CD8-positive, alpha-beta T cell (primary cell): ENCODE measurements at regions of chr3 and their contacts with region 1.

Region 1: DNA sequence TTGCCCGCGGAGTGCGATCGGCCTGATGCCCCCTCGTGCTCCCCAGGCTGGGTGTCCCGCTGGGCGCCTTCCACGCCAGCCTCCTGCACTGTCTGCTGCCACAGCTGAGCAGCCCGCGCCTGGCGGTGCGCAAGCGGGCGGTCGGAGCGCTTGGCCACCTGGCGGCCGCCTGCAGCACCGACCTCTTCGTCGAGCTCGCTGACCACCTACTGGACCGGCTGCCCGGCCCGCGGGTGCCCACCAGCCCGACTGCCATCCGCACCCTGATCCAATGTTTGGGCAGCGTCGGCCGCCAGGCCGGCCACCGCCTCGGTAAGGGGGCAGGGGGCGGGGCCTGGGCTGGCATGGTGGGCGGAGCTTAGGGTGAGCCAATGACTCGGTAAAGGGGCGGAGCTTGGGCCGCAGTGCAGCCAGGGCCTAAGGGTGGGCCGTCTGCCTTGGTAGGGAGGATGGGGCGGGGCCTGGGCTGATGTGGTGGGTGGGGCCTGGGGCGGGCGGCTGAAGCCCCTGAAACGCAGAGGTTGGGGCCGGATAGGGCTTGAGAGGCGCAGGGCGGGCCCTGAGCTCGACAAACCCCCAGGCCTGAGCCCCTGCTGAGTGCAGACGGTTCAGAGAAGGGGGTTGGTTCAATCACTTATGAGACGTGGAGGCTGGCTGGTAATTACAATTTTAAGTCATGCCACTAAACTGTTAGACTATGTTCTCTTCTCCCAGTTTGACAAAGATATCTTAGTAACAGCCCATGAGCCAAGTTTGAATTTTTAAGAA is 13.7 kb downstream of the CAND2 start:
- DNase-seq: peak; percentile 87 to 98 (median 96)
- ATAC-seq: peak; percentile 99
- H3K4me3 ChIP-seq: peak overlapping the region; percentile 51 to 73
- H3K4me3 Mint-ChIP-seq: peak overlapping the region; percentile 73
- H3K27ac ChIP-seq: no peak overlapping the region
- H3K27ac Mint-ChIP-seq: peak overlapping the region; percentile 64
- H3K4me1 ChIP-seq: peaks cover 8% of the 10 kb centered on the region
- H3K4me1 Mint-ChIP-seq: peaks cover 11% of the 10 kb centered on the region
- H3K27me3 ChIP-seq: no peaks in the 10 kb centered on the region
- H3K27me3 Mint-ChIP-seq: no peaks in the 10 kb centered on the region
- CTCF ChIP-seq: peak; percentile 89

Region 2: DNA sequence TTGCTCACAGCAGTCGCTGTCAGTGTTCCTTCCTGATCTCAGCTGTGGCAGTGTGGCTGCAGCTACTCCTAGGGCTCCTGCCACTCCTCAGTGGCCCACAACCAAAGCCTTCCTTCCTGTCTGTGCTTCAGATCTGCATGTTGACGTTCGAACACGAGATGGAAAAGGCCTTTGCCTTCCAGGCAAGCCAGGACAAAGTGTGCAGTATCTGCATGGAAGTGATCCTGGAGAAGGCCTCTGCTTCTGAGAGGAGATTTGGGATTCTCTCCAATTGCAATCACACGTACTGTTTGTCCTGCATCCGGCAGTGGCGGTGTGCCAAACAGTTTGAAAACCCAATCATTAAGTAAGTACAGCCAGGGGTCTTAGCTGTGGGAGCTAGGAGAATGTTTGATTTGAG is 235.5 kb before region 1 on chr3:
- CTCF ChIA-PET with region 1: no interaction called
- POLR2A ChIA-PET with region 1: no interaction called
- intact Hi-C with region 1: no loop called
- DNase-seq: no peak
- ATAC-seq: no peak
- H3K4me3 ChIP-seq: no peak overlapping the region
- H3K4me3 Mint-ChIP-seq: no peak overlapping the region
- H3K27ac ChIP-seq: no peak overlapping the region
- H3K27ac Mint-ChIP-seq: no peak overlapping the region
- H3K4me1 ChIP-seq: no peaks in the 10 kb centered on the region
- H3K4me1 Mint-ChIP-seq: no peaks in the 10 kb centered on the region
- H3K27me3 ChIP-seq: no peaks in the 10 kb centered on the region
- H3K27me3 Mint-ChIP-seq: no peaks in the 10 kb centered on the region
- CTCF ChIP-seq: no peak

Region 3: DNA sequence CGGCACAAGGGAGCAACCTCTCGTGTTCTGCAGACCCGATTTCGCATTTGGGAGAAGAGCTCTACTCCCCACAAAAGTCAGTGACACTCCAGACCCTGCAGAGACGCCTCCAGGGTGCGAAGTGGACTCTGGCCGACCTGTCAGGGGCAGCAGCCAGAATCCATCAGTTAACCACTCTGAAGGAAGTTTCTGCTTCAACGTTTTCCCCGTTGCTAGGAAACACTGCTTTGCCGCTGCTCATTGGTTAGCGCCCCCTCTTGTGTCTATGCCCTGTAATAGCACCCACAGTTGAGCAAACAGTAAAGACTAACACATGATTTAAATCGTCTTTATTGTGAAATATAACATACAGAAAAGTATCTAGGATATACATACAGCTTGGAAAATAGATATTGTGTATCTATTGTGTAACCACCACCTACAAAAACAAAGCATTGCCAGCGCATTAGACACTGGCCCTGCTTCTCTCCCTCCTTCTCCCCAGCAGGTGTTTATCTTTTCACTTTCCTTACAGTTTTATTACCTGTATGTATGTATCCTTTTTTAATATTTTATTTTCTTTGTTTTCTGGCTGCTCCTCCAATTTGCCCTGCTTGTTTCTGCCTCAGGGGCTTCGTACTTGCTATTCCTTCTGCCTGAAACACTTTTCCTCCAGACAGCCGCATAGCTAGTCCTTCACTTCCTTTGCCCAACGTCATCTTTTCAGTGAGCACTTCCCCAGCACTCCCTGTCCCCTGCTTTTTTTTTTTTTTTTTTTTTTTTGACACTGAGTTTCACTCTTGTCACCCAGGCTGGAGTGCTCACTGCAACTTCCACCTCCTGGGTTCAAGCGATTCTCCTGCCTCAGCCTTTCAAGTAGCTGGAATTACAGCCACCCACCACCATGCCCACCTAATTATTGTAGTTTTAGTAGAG is 90.0 kb before region 1 on chr3:
- CTCF ChIA-PET with region 1: interaction called, 5 read pairs
- POLR2A ChIA-PET with region 1: no interaction called
- intact Hi-C with region 1: loop called in 1 of 2 experiments (anchors 5 kb)
- DNase-seq: peak; percentile 46 to 89 (median 71)
- ATAC-seq: peak; percentile 99
- H3K4me3 ChIP-seq: no peak overlapping the region
- H3K4me3 Mint-ChIP-seq: peak overlapping the region; percentile 69
- H3K27ac ChIP-seq: no peak overlapping the region
- H3K27ac Mint-ChIP-seq: no peak overlapping the region
- H3K4me1 ChIP-seq: peaks cover 4% of the 10 kb centered on the region
- H3K4me1 Mint-ChIP-seq: peaks cover 10% of the 10 kb centered on the region
- H3K27me3 ChIP-seq: peaks cover 0 to 3% of the 10 kb centered on the region in 2 experiments
- H3K27me3 Mint-ChIP-seq: no peaks in the 10 kb centered on the region
- CTCF ChIP-seq: peak; percentile 84

Region 4: DNA sequence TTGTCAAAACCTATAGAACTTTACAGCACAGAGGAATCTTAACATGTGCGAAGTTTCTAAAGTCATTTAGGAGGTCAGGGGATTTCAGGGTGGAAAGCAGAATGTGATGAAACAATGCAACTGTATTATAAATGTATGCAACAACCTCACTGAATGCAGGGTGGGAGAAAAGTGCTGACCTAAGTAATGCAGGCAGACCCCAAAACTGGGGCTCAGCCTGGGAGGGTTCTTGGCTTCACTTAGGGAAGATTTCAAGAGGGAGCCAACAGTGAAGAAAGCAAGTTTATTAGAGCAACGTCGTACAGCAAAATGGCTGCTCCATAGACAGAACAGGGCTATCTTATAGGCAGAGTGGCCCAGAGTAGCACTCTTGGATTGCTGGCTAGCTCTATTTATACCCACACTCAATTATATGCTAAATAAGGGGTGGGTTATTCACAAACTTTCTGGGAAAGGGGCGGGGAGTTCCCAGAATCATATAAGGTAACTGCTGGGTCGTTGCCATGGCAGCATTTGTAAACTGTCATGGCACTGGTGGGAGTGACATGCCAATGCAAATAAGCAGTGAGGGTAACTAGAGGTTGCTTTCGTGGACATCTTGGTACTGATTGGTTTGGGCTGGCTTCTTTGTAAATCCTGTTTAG is 27.9 kb before region 1 on chr3:
- CTCF ChIA-PET with region 1: interaction called, 22 read pairs
- POLR2A ChIA-PET with region 1: no interaction called
- intact Hi-C with region 1: no loop called
- DNase-seq: peak in 1 of 9 experiments; percentile 24
- ATAC-seq: no peak
- H3K4me3 ChIP-seq: no peak overlapping the region
- H3K4me3 Mint-ChIP-seq: no peak overlapping the region
- H3K27ac ChIP-seq: no peak overlapping the region
- H3K27ac Mint-ChIP-seq: no peak overlapping the region
- H3K4me1 ChIP-seq: no peaks in the 10 kb centered on the region
- H3K4me1 Mint-ChIP-seq: no peaks in the 10 kb centered on the region
- H3K27me3 ChIP-seq: peaks cover 0 to 3% of the 10 kb centered on the region in 2 experiments
- H3K27me3 Mint-ChIP-seq: peaks cover 26% of the 10 kb centered on the region
- CTCF ChIP-seq: no peak

Region 5: GRCh38 chr3:12796171-12797123 is 13.8 kb before region 1 on chr3 and contains the start of gene CAND2:
- CTCF ChIA-PET with region 1: interaction called, 15 read pairs
- POLR2A ChIA-PET with region 1: interaction called, 16 read pairs
- intact Hi-C with region 1: loop called in 1 of 2 experiments (anchors 1 kb)
- DNase-seq: peak in 7 of 9 experiments; percentile 15 to 66 (median 43)
- ATAC-seq: peak; percentile 86
- H3K4me3 ChIP-seq: peak within 1 kb of the TSS; percentile 65 to 67
- H3K4me3 Mint-ChIP-seq: peak within 1 kb of the TSS; percentile 87
- H3K27ac ChIP-seq: no peak within 1 kb of the TSS
- H3K27ac Mint-ChIP-seq: peak within 1 kb of the TSS; percentile 32
- H3K4me1 ChIP-seq: peaks cover 6% of the 10 kb centered on the region
- H3K4me1 Mint-ChIP-seq: peaks cover 16% of the 10 kb centered on the region
- H3K27me3 ChIP-seq: no peaks in the 10 kb centered on the region
- H3K27me3 Mint-ChIP-seq: peaks cover 3% of the 10 kb centered on the region
- CTCF ChIP-seq: no peak
- total RNA-seq, gene CAND2: 0.92 to 1.1 TPM

Region 6: GRCh38 chr3:12830785-12831156 is 20.6 kb after region 1 on chr3:
- CTCF ChIA-PET with region 1: interaction called, 16 read pairs
- POLR2A ChIA-PET with region 1: interaction called, 8 read pairs
- intact Hi-C with region 1: no loop called
- DNase-seq: no peak
- ATAC-seq: no peak
- H3K4me3 ChIP-seq: no peak overlapping the region
- H3K4me3 Mint-ChIP-seq: no peak overlapping the region
- H3K27ac ChIP-seq: no peak overlapping the region
- H3K27ac Mint-ChIP-seq: peak overlapping the region; percentile 72
- H3K4me1 ChIP-seq: no peaks in the 10 kb centered on the region
- H3K4me1 Mint-ChIP-seq: no peaks in the 10 kb centered on the region
- H3K27me3 ChIP-seq: no peaks in the 10 kb centered on the region
- H3K27me3 Mint-ChIP-seq: no peaks in the 10 kb centered on the region
- CTCF ChIP-seq: no peak

Region 7: DNA sequence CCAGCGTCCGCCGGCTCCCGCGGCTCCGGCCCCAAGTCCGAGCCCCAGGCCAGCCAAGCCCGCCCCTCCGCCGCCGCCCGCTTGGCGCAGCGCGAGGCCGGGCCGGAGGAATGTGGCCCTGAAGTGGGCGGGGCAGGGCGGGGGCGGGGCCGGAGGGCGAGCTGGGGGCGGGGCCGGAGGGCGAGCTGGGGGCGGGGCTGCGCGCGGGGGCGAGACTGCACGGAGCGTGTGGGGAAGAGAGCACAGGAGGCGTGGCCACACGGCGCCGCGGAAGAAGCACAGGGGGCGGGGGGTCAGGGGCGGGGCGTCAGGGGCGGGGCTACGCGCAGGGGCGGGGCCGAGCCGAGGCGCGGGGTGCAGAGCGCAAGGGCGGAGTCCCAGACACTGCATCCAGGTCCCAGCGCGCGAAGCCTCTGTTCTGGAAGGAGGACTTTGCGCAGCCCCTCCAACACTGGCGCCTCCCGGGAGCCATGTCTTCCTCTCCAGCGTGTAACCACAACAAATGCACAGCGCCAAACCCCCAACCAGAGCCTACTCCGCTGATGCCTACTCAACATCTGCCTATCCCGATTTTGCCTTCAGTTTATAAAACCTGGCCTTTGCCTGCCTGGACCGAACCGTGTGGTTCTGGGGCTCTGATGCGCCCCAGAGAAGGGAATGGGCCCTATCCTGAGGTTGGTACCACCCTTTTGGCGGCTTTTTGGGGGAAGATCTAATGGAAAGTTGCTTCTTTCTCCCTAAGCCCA is 157.6 kb after region 1 on chr3:
- CTCF ChIA-PET with region 1: interaction called, 3 read pairs
- POLR2A ChIA-PET with region 1: no interaction called
- intact Hi-C with region 1: loop called (anchors 1 kb)
- DNase-seq: peak; percentile 82 to 95 (median 89)
- ATAC-seq: peak; percentile 97
- H3K4me3 ChIP-seq: peak overlapping the region; percentile 42 to 63
- H3K4me3 Mint-ChIP-seq: peak overlapping the region; percentile 82
- H3K27ac ChIP-seq: no peak overlapping the region
- H3K27ac Mint-ChIP-seq: peak overlapping the region; percentile 69
- H3K4me1 ChIP-seq: peaks cover 59% of the 10 kb centered on the region
- H3K4me1 Mint-ChIP-seq: peaks cover 74% of the 10 kb centered on the region
- H3K27me3 ChIP-seq: no peaks in the 10 kb centered on the region
- H3K27me3 Mint-ChIP-seq: no peaks in the 10 kb centered on the region
- CTCF ChIP-seq: no peak